AG04449 (cell line): ENCODE measurements at regions of chr19 and their contacts with region 1.

Region 1: DNA sequence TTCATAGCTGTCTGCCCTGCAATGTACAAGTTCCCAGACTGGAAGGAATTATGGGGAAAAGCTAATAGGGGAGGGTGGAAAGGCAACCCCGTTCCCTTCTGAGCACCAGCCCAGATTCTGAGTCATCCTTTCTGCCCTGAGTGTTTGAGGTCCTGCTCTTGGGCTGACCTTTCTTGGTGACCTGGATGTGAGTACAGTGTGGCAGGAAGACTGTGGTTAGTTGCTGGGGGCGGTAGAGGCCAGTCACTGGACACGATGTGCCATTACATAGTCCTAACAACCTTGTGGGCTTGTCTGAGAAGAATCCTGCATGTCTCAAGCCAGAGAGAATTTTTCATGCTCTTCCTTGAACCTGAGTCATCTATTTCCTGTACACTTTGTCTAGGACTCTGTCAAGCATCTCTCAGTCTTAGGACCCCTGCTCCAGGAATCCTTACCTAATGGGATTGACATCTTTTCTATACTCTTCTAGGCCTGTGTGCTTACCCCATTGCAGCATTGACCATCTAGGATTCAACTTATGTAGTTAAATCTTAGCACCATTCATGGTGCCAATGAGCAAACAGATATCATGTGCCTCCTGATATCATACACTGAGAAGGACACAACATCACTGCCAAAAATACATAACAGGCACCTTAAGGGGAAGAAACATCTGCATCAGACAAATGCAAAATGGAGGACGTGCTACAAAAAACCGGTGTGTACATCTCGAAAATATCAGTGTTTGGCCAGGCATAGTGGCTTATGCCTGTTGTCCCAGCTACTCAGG is 8.1 kb upstream of the ANGPTL4 start:
- DNase-seq: peak; percentile 75
- H3K4me3 ChIP-seq: no peak overlapping the region
- CTCF ChIP-seq: no peak

Region 2: DNA sequence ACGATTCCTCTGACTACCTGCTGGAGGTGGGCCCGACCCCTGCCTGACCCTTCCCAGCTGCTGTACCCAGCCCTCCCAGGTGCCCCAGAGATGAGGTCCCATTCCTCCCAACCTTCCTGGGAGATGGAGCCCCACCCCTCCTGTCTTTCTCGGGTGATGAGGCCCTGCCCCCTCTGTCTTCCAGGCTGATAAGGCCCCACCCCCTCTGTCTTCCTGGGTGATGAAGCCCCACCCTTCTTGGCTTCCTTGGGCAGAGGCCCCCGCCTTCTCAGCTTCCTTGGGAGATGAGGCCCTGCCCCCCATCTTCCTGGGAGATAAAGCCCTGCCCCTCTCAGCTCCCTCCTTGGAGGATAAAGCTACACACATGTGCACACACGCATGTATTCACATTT is 98.8 kb before region 1 on chr19:
- CTCF ChIA-PET with region 1: no interaction called
- POLR2A ChIA-PET with region 1: no interaction called
- DNase-seq: no peak
- H3K4me3 ChIP-seq: no peak overlapping the region
- CTCF ChIP-seq: no peak

Region 3: DNA sequence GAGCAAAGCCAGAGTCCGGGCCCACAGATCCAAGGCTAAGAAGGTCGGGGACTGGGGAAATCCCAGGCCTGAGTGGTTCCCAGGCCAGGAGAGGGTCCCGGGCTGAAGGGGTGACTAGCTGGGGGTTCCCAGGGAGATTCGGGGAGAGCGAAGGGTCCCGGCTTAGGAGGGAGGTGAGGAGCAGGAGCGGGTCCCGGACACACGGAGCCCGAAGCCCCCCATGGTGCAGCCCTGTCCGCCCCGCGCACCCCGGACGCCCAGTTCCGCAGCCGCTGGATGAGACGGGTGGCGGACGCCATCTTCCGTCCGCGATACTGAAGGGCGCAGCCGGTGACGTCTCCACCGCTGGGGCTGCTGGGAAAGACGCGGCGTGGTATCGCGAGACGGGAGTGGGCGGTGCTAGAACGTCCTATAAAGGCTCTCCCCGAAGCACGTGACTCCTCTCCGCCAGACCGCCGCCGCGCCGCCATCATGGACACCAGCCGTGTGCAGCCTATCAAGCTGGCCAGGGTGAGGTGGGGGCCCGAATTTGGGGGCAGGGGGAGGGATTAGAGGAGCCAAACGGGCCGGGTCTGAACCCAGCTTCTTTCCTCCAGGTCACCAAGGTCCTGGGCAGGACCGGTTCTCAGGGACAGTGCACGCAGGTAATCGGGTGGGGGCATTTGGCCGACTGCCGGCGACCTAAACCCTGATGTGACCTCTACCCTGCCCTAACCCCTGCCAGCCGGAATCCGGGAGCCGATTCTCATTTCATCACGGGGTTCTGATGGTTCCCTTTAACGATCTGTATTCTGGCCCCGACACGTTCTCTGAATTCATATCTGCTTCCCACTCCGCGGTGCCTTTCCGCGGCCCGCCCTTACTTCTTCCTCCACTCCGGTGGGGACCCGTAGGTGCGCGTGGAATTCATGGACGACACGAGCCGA is 34.5 kb before region 1 on chr19 and contains the starts of genes NDUFA7 and RPS28:
- CTCF ChIA-PET with region 1: interaction called, 15 read pairs
- POLR2A ChIA-PET with region 1: interaction called, 5 read pairs
- DNase-seq: peak; percentile 62
- H3K4me3 ChIP-seq: peak within 1 kb of the TSS; percentile 99
- CTCF ChIP-seq: peak; percentile 25

Region 4: DNA sequence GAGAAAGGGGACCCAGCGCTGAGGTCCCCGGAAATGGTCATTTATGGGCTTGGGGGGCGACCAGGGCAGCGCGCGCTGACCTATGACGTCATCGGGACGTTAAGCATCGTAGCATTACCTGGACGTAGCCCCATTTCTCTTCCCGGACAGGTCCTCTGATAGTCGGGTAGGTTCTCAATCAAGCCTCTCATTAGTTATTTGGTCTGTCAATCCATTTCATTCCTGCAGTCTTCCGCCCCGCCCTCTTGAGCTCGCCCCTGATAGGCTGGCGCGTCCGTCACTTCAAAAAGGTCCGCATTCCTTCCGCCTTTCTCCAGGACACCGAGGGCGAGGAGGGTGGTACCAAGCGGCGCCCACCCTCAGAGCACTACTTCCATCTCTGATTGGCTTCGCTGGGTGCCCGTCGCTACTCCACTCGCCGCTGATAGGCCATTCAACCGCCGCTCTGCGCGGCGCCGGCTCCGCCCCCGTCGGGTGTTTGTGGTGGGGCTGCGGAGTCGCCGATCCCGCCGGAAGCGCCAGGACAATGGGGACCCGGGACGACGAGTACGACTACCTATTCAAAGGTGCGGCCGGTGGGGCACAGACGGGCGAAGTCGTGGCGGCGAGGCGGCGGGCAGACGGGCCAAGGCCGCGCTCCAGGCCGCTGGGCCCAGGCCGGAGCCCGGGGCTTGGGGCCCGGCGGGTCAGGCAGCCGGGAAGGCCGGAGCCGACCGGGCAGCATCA is 34.2 kb after region 1 on chr19 and contains the start of gene RAB11B:
- CTCF ChIA-PET with region 1: interaction called, 121 read pairs
- POLR2A ChIA-PET with region 1: interaction called, 3 read pairs
- DNase-seq: peak; percentile 99
- H3K4me3 ChIP-seq: peak within 1 kb of the TSS; percentile 75
- CTCF ChIP-seq: no peak

Region 5: GRCh38 chr19:8412783-8413628 is 57.2 kb after region 1 on chr19 and contains the start of gene MARCHF2:
- CTCF ChIA-PET with region 1: interaction called, 53 read pairs
- POLR2A ChIA-PET with region 1: no interaction called
- DNase-seq: peak; percentile 74
- H3K4me3 ChIP-seq: peak within 1 kb of the TSS; percentile 67
- CTCF ChIP-seq: peak; percentile 57

Region 6: GRCh38 chr19:8451885-8452284 is 96.1 kb after region 1 on chr19:
- CTCF ChIA-PET with region 1: interaction called, 23 read pairs
- POLR2A ChIA-PET with region 1: no interaction called
- DNase-seq: no peak
- H3K4me3 ChIP-seq: no peak overlapping the region
- CTCF ChIP-seq: no peak

Region 7: GRCh38 chr19:8494158-8494557 is 138.3 kb after region 1 on chr19:
- CTCF ChIA-PET with region 1: interaction called, 21 read pairs
- POLR2A ChIA-PET with region 1: no interaction called
- DNase-seq: no peak
- H3K4me3 ChIP-seq: no peak overlapping the region
- CTCF ChIP-seq: no peak

Region 8: GRCh38 chr19:8526345-8527067 is 170.7 kb after region 1 on chr19:
- CTCF ChIA-PET with region 1: interaction called, 29 read pairs
- POLR2A ChIA-PET with region 1: no interaction called
- DNase-seq: peak; percentile 51
- H3K4me3 ChIP-seq: peak overlapping the region; percentile 95
- CTCF ChIP-seq: no peak